ENCODE measurements at regions of chr10 and their contacts with region 1.

Region 1: GRCh38 chr10:30413996-30414576 is 19.9 kb upstream of the MAP3K8 start:
- ATAC-seq: peak; percentile 38 to 92 (median 61)
- H3K4me3 ChIP-seq: no peak overlapping the region
- H3K27ac ChIP-seq: no peak overlapping the region
- H3K4me1 ChIP-seq: no peaks in the 10 kb centered on the region

Region 2: DNA sequence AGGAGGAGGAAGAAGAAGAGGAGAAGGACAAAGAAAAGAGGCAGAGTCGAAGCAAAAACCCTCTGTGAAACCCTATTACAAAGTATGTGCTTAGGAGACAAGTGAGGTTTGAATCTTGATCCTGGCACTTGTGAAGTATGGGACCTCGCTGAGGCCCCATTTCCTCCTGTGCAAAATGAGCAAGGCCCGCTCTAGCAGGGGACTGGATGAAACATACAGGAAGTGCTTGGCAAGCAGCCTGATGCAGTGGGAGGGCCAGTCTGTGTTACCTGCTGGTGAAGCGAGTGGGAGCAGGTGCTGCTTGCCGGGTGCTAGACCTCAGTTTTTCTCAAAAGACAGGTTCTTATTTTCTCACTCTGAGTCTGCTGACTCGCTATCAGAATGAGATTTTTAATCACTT is 505.1 kb before region 1 on chr10:
- in situ Hi-C with region 1: no loop called
- ATAC-seq: no peak
- H3K4me3 ChIP-seq: no peak overlapping the region
- H3K27ac ChIP-seq: no peak overlapping the region
- H3K4me1 ChIP-seq: no peaks in the 10 kb centered on the region

Region 3: DNA sequence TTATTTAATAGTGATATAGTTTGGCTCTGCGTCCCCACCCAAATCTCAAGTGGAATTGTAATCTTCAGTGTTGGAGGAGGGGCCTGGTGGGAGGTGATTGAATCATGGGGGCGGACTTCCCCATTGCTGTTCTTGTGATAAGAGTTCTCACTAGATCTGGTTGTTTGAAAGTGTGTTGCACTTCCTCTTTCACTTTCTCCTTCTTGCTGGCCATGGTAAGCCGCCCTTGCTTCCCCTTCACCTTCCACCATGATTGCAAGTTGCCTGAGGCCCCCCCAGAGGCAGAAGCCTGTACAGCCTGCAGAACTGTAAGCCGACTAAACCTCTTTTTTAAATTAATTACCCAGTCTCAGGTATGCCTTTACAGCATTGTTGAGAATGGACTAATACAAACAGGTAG is 166.4 kb before region 1 on chr10:
- in situ Hi-C with region 1: no loop called
- ATAC-seq: no peak
- H3K4me3 ChIP-seq: no peak overlapping the region
- H3K27ac ChIP-seq: no peak overlapping the region
- H3K4me1 ChIP-seq: no peaks in the 10 kb centered on the region

Region 4: GRCh38 chr10:30324448-30325110 is 89.5 kb before region 1 on chr10:
- in situ Hi-C with region 1: loop called in 1 of 9 experiments (anchors 25 kb)
- ATAC-seq: no peak
- H3K4me3 ChIP-seq: no peak overlapping the region
- H3K27ac ChIP-seq: no peak overlapping the region
- H3K4me1 ChIP-seq: no peaks in the 10 kb centered on the region

Region 5: DNA sequence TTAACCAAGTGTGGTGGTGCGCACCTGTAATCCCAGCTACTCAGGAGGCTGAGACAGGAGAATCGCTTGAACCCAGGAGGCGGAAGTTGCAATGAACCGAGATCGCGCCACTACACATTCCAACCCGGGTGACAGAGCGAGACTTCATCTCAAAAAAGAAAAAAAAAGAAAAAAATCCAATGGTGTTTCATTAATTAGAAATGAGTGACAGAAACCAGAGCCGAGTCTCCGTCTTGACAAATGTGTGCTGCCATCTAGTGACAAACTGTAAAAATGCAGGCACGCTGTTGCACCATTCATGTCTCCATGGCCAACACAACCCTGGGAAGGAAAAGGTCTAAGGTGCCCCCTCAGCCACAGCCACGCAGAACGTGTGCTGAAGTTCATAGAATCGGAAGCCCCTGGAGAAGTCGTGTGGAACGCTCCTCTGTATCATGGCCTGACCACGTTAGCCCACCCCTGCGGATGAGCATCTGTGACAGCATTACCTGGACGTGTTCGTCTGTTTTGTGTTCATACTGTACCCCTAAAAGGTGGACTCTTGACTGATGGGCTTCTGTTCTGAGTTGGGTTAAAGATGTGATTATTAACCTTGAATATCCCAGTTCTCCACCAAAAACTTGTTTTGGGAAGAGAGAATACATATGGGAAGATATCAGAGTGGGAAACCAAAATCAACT is 120.5 kb after region 1 on chr10:
- in situ Hi-C with region 1: loop called in 3 of 9 experiments (anchors 10 to 25 kb)
- ATAC-seq: peak in 5 of 8 experiments; percentile 46 to 80 (median 77)
- H3K4me3 ChIP-seq: no peak overlapping the region
- H3K27ac ChIP-seq: no peak overlapping the region
- H3K4me1 ChIP-seq: peaks cover 4 to 9% of the 10 kb centered on the region in 2 donors

Region 6: GRCh38 chr10:30591249-30591670 is 177.2 kb after region 1 on chr10:
- in situ Hi-C with region 1: loop called in 6 of 9 experiments (anchors 10 to 25 kb)
- ATAC-seq: peak; percentile 52 to 75 (median 68)
- H3K4me3 ChIP-seq: no peak overlapping the region
- H3K27ac ChIP-seq: no peak overlapping the region
- H3K4me1 ChIP-seq: peaks cover 3 to 7% of the 10 kb centered on the region in 2 donors

Measured in motor neuron (in vitro differentiated cells).